ENCODE measurements at regions of chr9 and their contacts with region 1.

Region 1: DNA sequence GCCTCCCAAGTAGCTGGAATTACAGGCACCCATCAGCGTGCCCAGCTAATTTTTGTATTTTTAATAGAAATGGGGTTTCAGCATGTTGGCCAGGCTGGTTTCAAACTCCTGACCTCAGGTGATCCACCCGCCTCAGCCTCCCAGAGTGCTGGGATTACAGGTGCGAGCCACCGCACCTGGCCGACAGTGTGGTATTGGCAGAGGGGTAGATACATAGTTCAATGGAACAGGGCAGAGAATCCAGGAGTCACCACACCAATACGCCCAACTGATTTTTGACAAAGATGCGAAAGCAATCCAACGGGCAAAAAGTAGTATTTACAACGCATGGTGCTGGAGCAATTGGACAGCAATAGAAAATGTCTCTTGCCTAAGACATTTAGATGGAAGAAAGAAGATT is 164.0 kb upstream of the PPP1R26 start:
- DNase-seq: no peak
- H3K4me3 ChIP-seq: no peak overlapping the region
- H3K27ac ChIP-seq: no peak overlapping the region
- H3K4me1 ChIP-seq: no peaks in the 10 kb centered on the region
- H3K27me3 ChIP-seq: no peaks in the 10 kb centered on the region
- CTCF ChIP-seq: no peak

Region 2: DNA sequence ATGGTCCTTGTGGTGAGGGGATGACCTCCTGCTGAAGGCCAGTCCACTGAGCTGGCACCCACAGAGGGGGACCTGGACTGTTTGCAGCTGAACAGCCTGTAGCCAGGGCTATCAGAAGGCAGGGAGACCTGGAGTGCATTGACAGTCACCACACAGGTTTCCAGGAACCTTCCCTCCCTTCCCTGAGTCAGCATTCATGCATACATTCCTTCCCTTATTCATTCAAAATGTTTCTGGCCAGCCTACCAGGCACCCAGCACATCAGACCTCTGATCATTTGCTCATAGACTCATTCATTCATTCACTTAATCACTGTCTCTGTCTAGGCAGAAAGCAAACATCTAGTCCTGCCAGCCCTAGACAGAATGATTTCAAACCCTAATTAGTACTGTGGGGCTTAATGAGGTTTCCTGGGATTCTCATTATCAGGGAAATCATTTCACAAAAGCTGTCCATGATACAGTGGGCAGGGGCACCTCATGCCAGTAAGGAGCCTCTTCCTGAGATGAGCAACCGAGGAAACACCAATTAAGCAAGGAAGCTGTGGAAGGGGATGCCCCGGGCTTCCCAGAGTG is 53.9 kb after region 1 on chr9:
- dilution Hi-C with region 1: loop called (anchors 5 kb)
- DNase-seq: peak; percentile 9
- H3K4me3 ChIP-seq: no peak overlapping the region
- H3K27ac ChIP-seq: no peak overlapping the region
- H3K4me1 ChIP-seq: peaks cover 13% of the 10 kb centered on the region
- H3K27me3 ChIP-seq: peaks cover 11% of the 10 kb centered on the region
- CTCF ChIP-seq: no peak

Region 3: GRCh38 chr9:135490980-135491464 is 175.4 kb after region 1 on chr9:
- dilution Hi-C with region 1: no loop called
- DNase-seq: no peak
- H3K4me3 ChIP-seq: no peak overlapping the region
- H3K27ac ChIP-seq: no peak overlapping the region
- H3K4me1 ChIP-seq: no peaks in the 10 kb centered on the region
- H3K27me3 ChIP-seq: no peaks in the 10 kb centered on the region
- CTCF ChIP-seq: no peak

Region 4: DNA sequence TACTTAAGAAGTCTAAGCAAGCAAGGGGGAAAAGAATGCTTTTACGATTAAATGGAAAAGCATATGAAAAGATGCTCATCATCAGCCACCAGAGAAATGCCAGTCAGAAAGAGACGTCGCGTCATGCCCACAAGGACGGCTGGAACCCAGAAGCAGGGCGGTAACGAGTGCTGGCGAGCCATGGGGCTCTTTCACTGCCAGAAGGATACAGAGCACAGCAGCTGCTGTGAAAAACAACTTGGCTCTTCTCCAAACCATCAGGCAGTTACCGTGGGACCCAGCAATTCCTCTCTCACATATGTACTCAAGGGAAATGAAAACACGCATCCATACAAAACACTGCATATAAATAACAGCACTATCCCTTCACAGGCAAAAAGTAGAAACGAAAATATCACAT is 496.2 kb after region 1 on chr9:
- dilution Hi-C with region 1: no loop called
- DNase-seq: no peak
- H3K4me3 ChIP-seq: no peak overlapping the region
- H3K27ac ChIP-seq: no peak overlapping the region
- H3K4me1 ChIP-seq: no peaks in the 10 kb centered on the region
- H3K27me3 ChIP-seq: no peaks in the 10 kb centered on the region
- CTCF ChIP-seq: no peak

Measured in keratinocyte (primary cell).